Panc1 (cell line): ENCODE measurements at regions of chr13 and their contacts with region 1.

Region 1: GRCh38 chr13:93775507-93776108 is 549.0 kb downstream of the GPC6 start:
- DNase-seq: no peak
- ATAC-seq: no peak
- H3K4me3 ChIP-seq: no peak overlapping the region
- H3K27ac ChIP-seq: no peak overlapping the region
- H3K4me1 ChIP-seq: no peaks in the 10 kb centered on the region
- H3K27me3 ChIP-seq: no peaks in the 10 kb centered on the region
- CTCF ChIP-seq: no peak

Region 2: DNA sequence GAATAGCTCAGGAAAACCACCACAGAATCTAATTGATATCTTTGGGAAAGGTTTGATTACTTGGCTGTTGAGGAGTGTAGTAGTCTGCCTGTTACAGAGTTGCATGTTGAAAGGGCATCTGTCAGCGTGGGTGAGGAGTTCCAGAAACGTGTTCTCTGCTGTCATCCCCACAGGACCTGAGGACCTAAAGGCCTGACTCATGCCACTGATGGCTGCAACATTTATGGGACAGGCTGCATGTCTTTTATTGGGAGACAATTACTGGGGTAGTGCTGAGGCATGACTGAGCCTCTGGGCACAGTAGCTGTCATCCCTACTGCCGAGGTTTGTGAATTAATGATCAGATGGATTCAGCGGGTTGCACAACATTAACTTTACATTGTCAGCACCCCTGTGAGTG is 23.1 kb before region 1 on chr13:
- CTCF ChIA-PET with region 1: no interaction called
- POLR2A ChIA-PET with region 1: no interaction called
- in situ Hi-C with region 1: no loop called
- intact Hi-C with region 1: loop called (anchors 2 kb)
- DNase-seq: no peak
- ATAC-seq: no peak
- H3K4me3 ChIP-seq: no peak overlapping the region
- H3K27ac ChIP-seq: no peak overlapping the region
- H3K4me1 ChIP-seq: no peaks in the 10 kb centered on the region
- H3K27me3 ChIP-seq: no peaks in the 10 kb centered on the region
- CTCF ChIP-seq: no peak